ENCODE measurements at regions of chr19 and their contacts with region 1.

Region 1: DNA sequence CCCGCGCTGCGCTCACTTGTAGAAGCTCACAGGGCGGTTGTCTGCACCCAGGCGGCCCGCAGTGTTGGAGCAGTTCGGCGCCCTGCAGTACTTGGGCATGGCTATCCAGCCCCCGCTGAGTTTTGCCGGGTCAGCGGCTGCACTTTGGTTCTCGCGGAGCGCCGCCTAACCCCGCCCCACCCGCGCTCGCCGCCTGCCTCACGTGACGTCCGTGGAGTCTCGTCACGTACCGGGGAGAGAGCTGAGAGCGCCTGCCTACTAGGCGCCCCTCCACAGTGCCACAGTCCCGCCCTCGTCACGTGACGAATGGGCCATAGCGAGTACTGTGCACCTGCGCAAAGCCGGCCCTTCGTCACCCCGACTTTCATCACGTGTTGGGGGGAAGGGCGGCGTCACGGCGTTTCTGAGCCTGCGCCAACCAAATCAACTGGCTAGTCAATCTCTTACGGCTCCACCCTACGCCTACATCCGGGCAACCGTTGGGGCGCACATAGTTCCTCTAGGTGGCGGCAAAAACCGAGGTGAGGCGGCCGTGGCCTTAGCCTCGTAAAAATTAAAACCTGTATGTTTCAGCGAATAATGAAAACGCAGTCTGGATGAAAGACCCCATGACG is at the start of gene THAP8:
- DNase-seq: peak; percentile 100
- H3K4me3 ChIP-seq: peak within 1 kb of the TSS; percentile 70 to 94 (median 90)
- H3K4me3 Mint-ChIP-seq: peak within 1 kb of the TSS; percentile 99 to 100
- H3K27ac ChIP-seq: peak within 1 kb of the TSS; percentile 93 to 95
- H3K27ac Mint-ChIP-seq: peak within 1 kb of the TSS; percentile 97 to 99 (median 98)
- H3K4me1 ChIP-seq: peaks cover 12 to 18% of the 10 kb centered on the region in 2 donors
- H3K4me1 Mint-ChIP-seq: peaks cover 17% of the 10 kb centered on the region
- H3K27me3 ChIP-seq: no peaks in the 10 kb centered on the region
- H3K27me3 Mint-ChIP-seq: peaks cover 0 to 1% (median 0%) of the 10 kb centered on the region in 3 donors
- CTCF ChIP-seq: peak; percentile 53
- polyA plus RNA-seq, gene THAP8: 2.4 to 6.0 (median 3.1) TPM

Region 2: DNA sequence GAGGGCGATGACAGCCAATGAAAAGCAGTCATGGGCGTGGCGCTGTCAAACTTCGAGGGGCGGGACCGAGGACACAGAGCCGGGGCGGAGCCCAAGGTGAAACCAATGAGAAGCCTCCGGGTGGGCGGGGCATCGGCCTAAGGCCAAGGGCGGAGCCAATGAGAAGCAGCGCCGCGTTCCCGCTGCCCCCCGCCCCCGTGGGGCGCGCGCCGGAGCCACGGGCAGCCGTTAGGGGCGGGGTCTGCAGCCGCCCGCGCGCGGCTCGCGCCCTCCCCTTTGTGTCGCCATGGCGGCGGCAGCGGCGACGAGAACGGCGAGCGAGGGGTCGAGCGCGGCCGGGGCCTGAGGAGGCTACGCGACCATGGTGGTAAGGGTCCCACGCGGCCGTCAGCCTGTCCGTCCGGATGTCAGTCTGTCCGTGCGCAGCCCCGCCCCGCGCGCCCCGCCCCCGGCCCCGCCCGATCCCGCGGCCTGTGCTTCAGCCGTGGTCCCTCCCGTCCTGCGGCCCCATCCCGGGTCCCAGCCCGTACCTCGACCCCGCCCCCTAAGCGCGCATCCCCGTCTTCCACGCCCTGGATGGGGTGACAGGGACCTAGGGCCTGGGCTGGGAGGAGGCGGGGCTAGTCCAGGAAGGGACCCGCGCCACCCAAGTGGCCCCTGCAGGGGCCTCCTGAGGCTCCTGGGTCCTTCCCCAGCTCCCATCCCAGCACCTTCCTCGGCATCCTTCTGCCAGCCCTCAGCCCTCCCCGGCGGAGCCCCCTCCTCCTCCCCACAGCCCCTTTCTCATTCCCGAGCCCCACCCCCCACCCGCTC is 278.7 kb before region 1 on chr19 and contains the start of gene ARHGAP33:
- intact Hi-C with region 1: loop called in 1 of 2 experiments (anchors 10 kb)
- DNase-seq: peak; percentile 95 to 99 (median 97)
- H3K4me3 ChIP-seq: peak within 1 kb of the TSS; percentile 63 to 80 (median 73)
- H3K4me3 Mint-ChIP-seq: peak within 1 kb of the TSS; percentile 84 to 85
- H3K27ac ChIP-seq: peak within 1 kb of the TSS in 1 of 2 donors; percentile 45
- H3K27ac Mint-ChIP-seq: peak within 1 kb of the TSS in 4 of 7 donors; percentile 21 to 80 (median 48)
- H3K4me1 ChIP-seq: peaks cover 14 to 19% of the 10 kb centered on the region in 2 donors
- H3K4me1 Mint-ChIP-seq: peaks cover 23% of the 10 kb centered on the region
- H3K27me3 ChIP-seq: no peaks in the 10 kb centered on the region
- H3K27me3 Mint-ChIP-seq: peaks cover 0 to 5% (median 4%) of the 10 kb centered on the region in 3 donors
- CTCF ChIP-seq: no peak
- polyA plus RNA-seq, gene ARHGAP33: 8.6 TPM in 1 of 3 donors, not detected in the others

Region 3: GRCh38 chr19:35899547-35900214 is 154.5 kb before region 1 on chr19:
- intact Hi-C with region 1: loop called in 1 of 2 experiments (anchors 10 kb)
- DNase-seq: peak; percentile 77 to 96 (median 89)
- H3K4me3 ChIP-seq: peak overlapping the region; percentile 80 to 99 (median 97)
- H3K4me3 Mint-ChIP-seq: peak overlapping the region; percentile 97 to 98
- H3K27ac ChIP-seq: peak overlapping the region; percentile 95 to 98
- H3K27ac Mint-ChIP-seq: peak overlapping the region; percentile 96 to 100 (median 100)
- H3K4me1 ChIP-seq: peaks cover 54 to 65% of the 10 kb centered on the region in 2 donors
- H3K4me1 Mint-ChIP-seq: peaks cover 54% of the 10 kb centered on the region
- H3K27me3 ChIP-seq: no peaks in the 10 kb centered on the region
- H3K27me3 Mint-ChIP-seq: peaks cover 0 to 10% (median 0%) of the 10 kb centered on the region in 3 donors
- CTCF ChIP-seq: no peak

Region 4: DNA sequence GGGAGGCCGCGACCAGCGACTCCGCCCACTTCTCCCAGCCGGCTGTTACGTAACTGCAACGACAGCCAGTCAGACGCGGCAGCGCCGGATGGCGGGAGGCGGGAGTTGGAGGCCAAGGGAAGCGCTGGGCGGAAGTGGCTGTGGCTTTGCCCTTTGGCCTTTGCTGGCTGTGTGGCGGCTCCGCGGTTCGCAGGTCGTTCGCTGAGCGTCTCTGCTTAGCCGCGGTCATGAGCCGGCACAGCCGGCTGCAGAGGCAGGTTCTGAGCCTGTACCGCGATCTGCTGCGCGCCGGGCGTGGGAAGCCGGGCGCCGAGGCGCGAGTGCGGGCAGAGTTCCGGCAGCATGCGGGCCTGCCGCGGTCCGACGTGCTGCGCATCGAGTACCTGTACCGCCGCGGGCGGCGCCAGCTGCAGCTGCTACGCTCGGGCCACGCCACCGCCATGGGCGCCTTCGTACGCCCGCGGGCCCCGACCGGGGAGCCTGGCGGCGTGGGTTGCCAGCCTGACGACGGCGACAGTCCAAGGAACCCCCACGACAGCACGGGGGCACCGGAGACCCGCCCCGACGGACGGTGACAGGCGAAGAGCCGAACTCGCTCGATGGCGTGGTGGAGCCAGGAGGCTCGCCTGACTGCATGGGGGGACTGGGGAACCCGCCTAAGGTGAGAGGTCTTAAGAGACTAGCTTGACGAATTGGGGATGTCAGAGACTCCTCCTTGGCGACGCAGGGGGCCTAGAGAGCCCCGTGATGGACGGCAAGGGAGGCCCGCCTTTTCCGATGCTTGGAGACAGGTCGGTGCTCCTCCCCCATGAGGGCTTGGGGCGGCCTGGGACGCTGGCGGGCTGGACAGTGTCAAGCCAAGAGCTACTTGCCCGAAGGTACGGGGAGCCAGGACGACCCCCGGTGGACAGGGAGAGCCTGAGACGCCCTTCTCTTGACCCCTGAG is 58.9 kb before region 1 on chr19 and contains the start of gene SDHAF1:
- intact Hi-C with region 1: loop called in 1 of 2 experiments (anchors 5 kb)
- DNase-seq: peak; percentile 93 to 96 (median 94)
- H3K4me3 ChIP-seq: peak within 1 kb of the TSS; percentile 52 to 85 (median 73)
- H3K4me3 Mint-ChIP-seq: peak within 1 kb of the TSS; percentile 88 to 95
- H3K27ac ChIP-seq: peak within 1 kb of the TSS; percentile 27 to 76
- H3K27ac Mint-ChIP-seq: peak within 1 kb of the TSS; percentile 85 to 95 (median 87)
- H3K4me1 ChIP-seq: peaks cover 27 to 28% of the 10 kb centered on the region in 2 donors
- H3K4me1 Mint-ChIP-seq: peaks cover 34% of the 10 kb centered on the region
- H3K27me3 ChIP-seq: no peaks in the 10 kb centered on the region
- H3K27me3 Mint-ChIP-seq: peaks cover 2 to 4% (median 3%) of the 10 kb centered on the region in 3 donors
- CTCF ChIP-seq: no peak
- polyA plus RNA-seq, gene SDHAF1: 10.4 to 26.9 (median 19.0) TPM

Region 5: GRCh38 chr19:36014029-36014924 is 39.9 kb before region 1 on chr19 and contains the start of gene ALKBH6:
- intact Hi-C with region 1: loop called (anchors 2 to 5 kb)
- DNase-seq: peak; percentile 96 to 99 (median 97)
- H3K4me3 ChIP-seq: peak within 1 kb of the TSS; percentile 71 to 89 (median 83)
- H3K4me3 Mint-ChIP-seq: peak within 1 kb of the TSS; percentile 97 to 99
- H3K27ac ChIP-seq: peak within 1 kb of the TSS; percentile 56 to 86
- H3K27ac Mint-ChIP-seq: peak within 1 kb of the TSS; percentile 94 to 99 (median 96)
- H3K4me1 ChIP-seq: peaks cover 14 to 24% of the 10 kb centered on the region in 2 donors
- H3K4me1 Mint-ChIP-seq: peaks cover 31% of the 10 kb centered on the region
- H3K27me3 ChIP-seq: peaks cover 0 to 8% of the 10 kb centered on the region in 2 donors
- H3K27me3 Mint-ChIP-seq: peaks cover 10 to 12% (median 12%) of the 10 kb centered on the region in 3 donors
- CTCF ChIP-seq: no peak
- polyA plus RNA-seq, gene ALKBH6: 13.1 to 29.3 (median 16.1) TPM

Measured in CD14-positive monocyte (primary cell).